ENCODE measurements at regions of chr4 and their contacts with region 1.

Region 1: GRCh38 chr4:75930152-75930551 is 10.7 kb downstream of the NAAA start:
- DNase-seq: no peak
- H3K4me3 ChIP-seq: no peak overlapping the region
- H3K27ac ChIP-seq: no peak overlapping the region
- H3K4me1 ChIP-seq: no peaks in the 10 kb centered on the region
- H3K27me3 ChIP-seq: no peaks in the 10 kb centered on the region
- CTCF ChIP-seq: no peak
- EP300 ChIP-seq: no peak
- RAD21 ChIP-seq: no peak

Region 2: DNA sequence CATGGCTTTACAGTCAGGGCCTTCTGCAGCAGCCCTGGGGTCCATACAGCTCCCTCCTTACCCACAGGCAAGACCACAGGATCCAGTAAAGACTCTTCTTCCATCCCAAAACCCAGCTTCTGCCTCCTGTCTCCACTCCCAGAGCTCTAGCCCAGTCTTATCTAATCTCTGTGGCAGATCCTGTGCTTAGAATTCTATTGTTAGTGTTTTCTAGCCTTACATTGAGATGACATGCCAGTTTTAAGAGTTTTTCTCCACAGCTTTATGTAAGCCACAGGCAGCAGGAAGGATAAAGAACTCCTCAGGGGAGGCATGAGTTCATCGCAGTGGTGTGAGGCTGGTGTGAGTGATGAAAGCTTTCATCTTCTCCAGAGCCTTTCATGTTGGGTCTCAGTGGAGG is 545.0 kb before region 1 on chr4:
- CTCF ChIA-PET with region 1: no interaction called
- POLR2A ChIA-PET with region 1: no interaction called
- DNase-seq: no peak
- H3K4me3 ChIP-seq: no peak overlapping the region
- H3K27ac ChIP-seq: no peak overlapping the region
- H3K4me1 ChIP-seq: no peaks in the 10 kb centered on the region
- H3K27me3 ChIP-seq: no peaks in the 10 kb centered on the region
- CTCF ChIP-seq: no peak
- EP300 ChIP-seq: no peak
- RAD21 ChIP-seq: no peak

Region 3: GRCh38 chr4:75902352-75902751 is 27.8 kb before region 1 on chr4 and contains the start of gene PPEF2:
- CTCF ChIA-PET with region 1: no interaction called
- POLR2A ChIA-PET with region 1: no interaction called
- DNase-seq: no peak
- H3K4me3 ChIP-seq: no peak within 1 kb of the TSS
- H3K27ac ChIP-seq: no peak within 1 kb of the TSS
- H3K4me1 ChIP-seq: no peaks in the 10 kb centered on the region
- H3K27me3 ChIP-seq: no peaks in the 10 kb centered on the region; the same call in 1 of the 2 replicates
- CTCF ChIP-seq: no peak
- EP300 ChIP-seq: no peak
- RAD21 ChIP-seq: no peak
- polyA plus RNA-seq, gene PPEF2: not detected in 2 replicates

Region 4: GRCh38 chr4:75916091-75916661 is 14.0 kb before region 1 on chr4:
- CTCF ChIA-PET with region 1: interaction called, 10 read pairs
- POLR2A ChIA-PET with region 1: no interaction called
- DNase-seq: peak; percentile 59
- H3K4me3 ChIP-seq: peak overlapping the region in 1 of 2 experiments; percentile 39; a peak in 1 of 4 replicates
- H3K27ac ChIP-seq: peak overlapping the region in 1 of 2 experiments; percentile 67; a peak in 2 of 4 replicates
- H3K4me1 ChIP-seq: no peaks in the 10 kb centered on the region
- H3K27me3 ChIP-seq: no peaks in the 10 kb centered on the region
- CTCF ChIP-seq: peak; percentile 84
- EP300 ChIP-seq: no peak
- RAD21 ChIP-seq: peak; percentile 58

Region 5: DNA sequence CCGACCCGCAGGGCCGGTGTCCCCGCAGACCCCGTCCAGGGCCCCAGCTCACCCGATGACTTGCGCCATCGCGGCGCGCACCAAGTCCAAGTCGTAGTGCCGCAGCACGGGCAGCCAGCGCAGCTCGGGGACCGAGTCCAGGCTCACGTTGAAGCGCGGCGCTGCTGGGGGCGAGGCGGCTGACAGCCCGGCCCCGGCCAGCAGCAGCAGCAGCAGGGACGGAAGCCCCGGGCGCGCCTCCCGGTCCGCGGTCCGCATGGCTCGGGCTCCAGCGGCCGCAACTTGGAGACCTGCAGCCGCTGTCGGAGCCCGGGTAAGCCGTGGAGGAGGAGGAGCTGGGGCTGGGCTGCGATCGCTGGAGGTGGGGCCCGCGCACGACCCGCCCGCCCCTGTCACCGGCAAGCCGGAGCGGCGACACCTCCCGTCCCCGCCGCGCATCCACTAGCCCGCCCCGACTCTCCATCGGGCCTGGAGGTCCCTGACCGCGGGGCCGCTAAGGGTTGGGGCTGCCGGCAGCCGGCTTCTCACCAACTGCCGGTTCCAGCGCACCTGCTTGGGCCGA is 10.6 kb after region 1 on chr4 and contains the start of gene NAAA:
- CTCF ChIA-PET with region 1: no interaction called
- POLR2A ChIA-PET with region 1: no interaction called
- DNase-seq: peak; percentile 92
- H3K4me3 ChIP-seq: peak within 1 kb of the TSS; percentile 45 to 57
- H3K27ac ChIP-seq: no peak within 1 kb of the TSS
- H3K4me1 ChIP-seq: no peaks in the 10 kb centered on the region; a peak in 1 of 4 replicates
- H3K27me3 ChIP-seq: no peaks in the 10 kb centered on the region
- CTCF ChIP-seq: peak; percentile 31; the same call in 1 of the 2 replicates
- EP300 ChIP-seq: no peak
- RAD21 ChIP-seq: no peak
- polyA plus RNA-seq, gene NAAA: 3.4 and 3.5 TPM in 2 replicates